ENCODE measurements at regions of chr19 and their contacts with region 1.

Region 1: DNA sequence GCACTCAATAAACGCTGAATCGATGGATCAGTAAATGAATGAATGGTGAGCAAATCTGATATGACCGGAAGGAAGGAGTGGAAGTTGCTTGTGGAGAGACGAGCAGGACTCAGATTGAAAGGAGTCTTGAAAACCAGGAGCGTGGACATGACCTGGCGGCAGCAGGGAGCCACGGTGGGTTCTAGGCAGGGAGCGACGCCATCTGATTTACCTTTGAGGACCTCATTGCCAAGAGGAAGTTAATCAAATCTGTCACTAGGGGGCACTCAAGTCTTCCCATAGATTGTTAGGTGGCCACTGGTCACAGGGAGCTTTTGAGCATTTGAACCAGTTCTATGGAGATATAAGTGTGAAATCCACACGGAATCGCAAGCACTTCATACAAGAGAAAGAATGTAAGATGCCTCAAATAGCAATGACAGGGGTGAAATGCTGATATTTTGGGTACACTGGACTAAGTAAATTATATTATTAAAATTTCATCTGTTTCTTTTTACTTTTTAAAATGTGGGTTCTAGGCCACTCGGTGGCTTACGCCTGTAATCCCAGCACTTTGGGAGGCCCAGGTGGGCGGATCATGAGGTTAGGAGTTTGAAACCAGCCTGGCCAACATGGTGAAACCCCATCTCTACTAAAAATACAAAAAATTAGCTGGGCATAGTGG is 9.2 kb upstream of the FBN3 start:
- DNase-seq: no peak
- ATAC-seq: peak; percentile 65
- H3K4me3 Mint-ChIP-seq: no peak overlapping the region
- H3K27ac Mint-ChIP-seq: peak overlapping the region; percentile 61
- H3K4me1 Mint-ChIP-seq: peaks cover 23% of the 10 kb centered on the region
- H3K27me3 Mint-ChIP-seq: peaks cover 10% of the 10 kb centered on the region
- CTCF ChIP-seq: no peak

Region 2: GRCh38 chr19:7970716-7971448 is 187.7 kb before region 1 on chr19:
- CTCF ChIA-PET with region 1: no interaction called
- POLR2A ChIA-PET with region 1: no interaction called
- intact Hi-C with region 1: loop called (anchors 1 kb)
- DNase-seq: peak; percentile 17
- ATAC-seq: peak; percentile 56
- H3K4me3 Mint-ChIP-seq: no peak overlapping the region
- H3K27ac Mint-ChIP-seq: no peak overlapping the region
- H3K4me1 Mint-ChIP-seq: peaks cover 1% of the 10 kb centered on the region
- H3K27me3 Mint-ChIP-seq: no peaks in the 10 kb centered on the region
- CTCF ChIP-seq: no peak

Region 3: GRCh38 chr19:8050274-8051096 is 108.1 kb before region 1 on chr19:
- CTCF ChIA-PET with region 1: no interaction called
- POLR2A ChIA-PET with region 1: no interaction called
- intact Hi-C with region 1: no loop called
- DNase-seq: peak; percentile 88
- ATAC-seq: peak; percentile 97
- H3K4me3 Mint-ChIP-seq: peak overlapping the region; percentile 68
- H3K27ac Mint-ChIP-seq: peak overlapping the region; percentile 30
- H3K4me1 Mint-ChIP-seq: peaks cover 16% of the 10 kb centered on the region
- H3K27me3 Mint-ChIP-seq: peaks cover 4% of the 10 kb centered on the region
- CTCF ChIP-seq: no peak

Region 4: DNA sequence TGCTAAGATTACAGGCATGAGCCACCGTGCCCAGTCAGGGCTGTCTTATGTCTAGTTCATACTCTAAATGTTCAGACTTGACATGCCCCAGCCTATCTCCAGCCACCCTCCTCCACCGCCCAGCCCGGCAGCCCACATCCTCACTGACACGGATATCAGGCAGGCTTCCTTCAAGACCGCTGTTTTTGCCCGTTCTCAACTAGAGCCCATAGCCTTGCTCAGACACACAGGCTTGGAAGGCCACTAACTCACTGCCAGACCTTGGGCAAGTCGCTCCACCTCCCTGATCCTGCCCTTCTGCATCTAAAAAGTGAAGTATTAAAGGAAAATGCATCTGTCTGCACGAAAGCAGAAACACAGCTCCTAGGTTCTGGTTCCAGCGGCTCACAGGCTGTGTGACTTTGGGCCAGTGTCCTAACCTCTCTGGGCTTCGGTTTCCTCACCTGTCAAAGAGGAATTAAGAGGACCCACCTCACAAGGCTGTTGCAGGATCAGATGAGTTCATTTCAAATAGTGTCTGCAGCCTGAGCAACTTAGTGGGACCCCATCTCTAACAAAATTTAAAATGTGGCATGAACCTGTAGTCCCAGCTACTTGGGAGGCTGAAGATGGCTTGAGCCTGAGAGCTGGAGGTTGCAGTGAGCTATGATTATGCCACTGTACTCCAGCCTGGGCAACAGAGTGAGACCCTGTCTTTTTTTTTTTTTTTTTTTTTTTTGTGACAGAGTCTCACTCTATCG is 36.2 kb after region 1 on chr19:
- CTCF ChIA-PET with region 1: interaction called, 12 read pairs
- POLR2A ChIA-PET with region 1: interaction called, 76 read pairs
- intact Hi-C with region 1: loop called (anchors 1 kb)
- DNase-seq: peak; percentile 44
- ATAC-seq: peak; percentile 18
- H3K4me3 Mint-ChIP-seq: peak overlapping the region; percentile 80
- H3K27ac Mint-ChIP-seq: peak overlapping the region; percentile 97
- H3K4me1 Mint-ChIP-seq: peaks cover 65% of the 10 kb centered on the region
- H3K27me3 Mint-ChIP-seq: no peaks in the 10 kb centered on the region
- CTCF ChIP-seq: no peak

Region 5: DNA sequence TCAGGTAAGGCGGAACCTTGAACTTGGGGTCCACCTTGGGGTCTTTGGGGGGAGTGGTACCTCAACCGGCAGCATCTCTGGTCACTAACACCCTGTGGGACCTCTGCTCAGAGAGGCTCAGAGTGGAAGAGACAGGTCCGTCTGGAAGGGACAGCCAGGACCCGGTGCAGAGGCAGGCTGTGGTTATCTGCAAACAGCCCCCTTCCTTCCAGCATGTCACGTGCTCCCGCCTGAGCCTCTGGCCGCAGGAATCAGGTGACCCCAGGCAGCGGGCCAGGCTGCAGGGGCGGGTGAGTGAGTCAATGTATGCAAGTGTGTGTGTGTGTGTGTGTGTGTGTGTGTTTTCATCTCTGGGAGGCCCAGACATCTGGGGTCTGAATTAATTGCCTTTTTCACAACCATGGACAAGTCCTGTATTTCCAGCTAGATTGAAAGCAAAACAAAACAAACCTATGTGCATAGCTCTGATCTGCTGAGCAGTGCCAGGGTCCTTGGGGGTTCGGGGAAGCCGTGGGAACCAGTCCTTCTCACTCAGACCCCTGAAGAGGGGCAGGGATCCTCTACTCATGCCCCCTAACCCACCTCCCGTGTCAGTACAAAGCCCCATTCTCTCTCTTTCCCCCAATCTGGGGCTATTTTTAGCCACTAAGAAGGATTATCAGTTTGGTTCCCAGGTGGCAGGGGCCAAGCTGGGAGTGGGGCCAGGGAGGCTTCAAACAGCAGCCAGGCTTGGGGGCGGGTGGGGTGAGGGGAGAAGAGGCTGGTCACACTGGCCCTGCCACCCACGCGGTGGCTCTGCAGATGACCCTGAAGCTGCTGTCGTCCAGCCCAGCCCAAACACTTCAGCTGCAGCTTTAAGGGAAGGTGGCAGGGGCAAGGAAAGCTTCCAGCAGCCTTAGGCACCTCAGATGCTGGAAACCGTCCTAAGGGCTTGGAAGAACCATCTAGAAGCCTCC is 82.0 kb after region 1 on chr19:
- CTCF ChIA-PET with region 1: interaction called, 15 read pairs
- POLR2A ChIA-PET with region 1: interaction called, 3 read pairs
- intact Hi-C with region 1: loop called (anchors 5 kb)
- DNase-seq: peak; percentile 34
- ATAC-seq: peak; percentile 88
- H3K4me3 Mint-ChIP-seq: peak overlapping the region; percentile 36
- H3K27ac Mint-ChIP-seq: peak overlapping the region; percentile 54
- H3K4me1 Mint-ChIP-seq: peaks cover 57% of the 10 kb centered on the region
- H3K27me3 Mint-ChIP-seq: no peaks in the 10 kb centered on the region
- CTCF ChIP-seq: no peak

Region 6: GRCh38 chr19:8321060-8321985 is 162.8 kb after region 1 on chr19 and contains the starts of genes NDUFA7 and RPS28:
- CTCF ChIA-PET with region 1: interaction called, 4 read pairs
- POLR2A ChIA-PET with region 1: interaction called, 4 read pairs
- intact Hi-C with region 1: loop called (anchors 1 kb)
- DNase-seq: peak; percentile 97
- ATAC-seq: peak; percentile 95
- H3K4me3 Mint-ChIP-seq: peak within 1 kb of the TSS; percentile 98
- H3K27ac Mint-ChIP-seq: peak within 1 kb of the TSS; percentile 96
- H3K4me1 Mint-ChIP-seq: peaks cover 37% of the 10 kb centered on the region
- H3K27me3 Mint-ChIP-seq: no peaks in the 10 kb centered on the region
- CTCF ChIP-seq: no peak
- total RNA-seq, gene NDUFA7: 31.1 and 35.8 TPM in 2 replicates
- total RNA-seq, gene RPS28: 3,149 and 3,168 TPM in 2 replicates

Measured in activated B cell treated with CpG ODN at 0.5 μM for 24 hours (primary cell).